GM10248 (cell line): ENCODE measurements at regions of chr5 and their contacts with region 1.

Region 1: DNA sequence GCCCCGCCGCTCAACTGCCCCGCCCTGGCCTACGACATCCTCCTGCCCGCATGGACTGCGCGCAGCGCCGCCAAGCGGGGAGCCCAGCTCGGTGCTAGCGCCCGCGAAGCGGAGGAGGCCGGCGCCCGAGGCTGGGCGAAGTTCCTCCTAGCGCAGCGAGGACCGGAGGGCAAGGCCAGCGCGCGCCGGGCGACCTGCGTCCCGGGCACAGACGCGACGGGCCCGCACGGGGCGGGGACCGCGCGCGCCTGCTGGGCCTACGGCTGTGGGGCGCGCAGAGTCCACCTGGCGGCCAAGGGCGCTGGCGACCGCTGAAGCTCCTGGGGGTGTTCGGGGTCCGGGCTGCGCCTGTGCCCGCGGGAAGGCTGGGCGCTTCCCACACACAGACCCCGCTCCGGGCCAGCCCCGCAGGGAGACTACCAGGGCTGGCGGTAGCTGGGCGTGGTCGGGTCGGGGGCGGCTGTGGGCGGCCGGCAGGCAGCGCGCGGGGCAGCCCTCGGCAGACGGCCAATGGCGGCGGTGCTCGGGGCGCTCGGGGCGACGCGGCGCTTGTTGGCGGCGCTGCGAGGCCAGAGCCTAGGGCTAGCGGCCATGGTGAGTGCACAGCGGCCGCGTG is at the start of gene PCBD2:
- DNase-seq: peak; percentile 89
- CTCF ChIP-seq: peak; percentile 95

Region 2: DNA sequence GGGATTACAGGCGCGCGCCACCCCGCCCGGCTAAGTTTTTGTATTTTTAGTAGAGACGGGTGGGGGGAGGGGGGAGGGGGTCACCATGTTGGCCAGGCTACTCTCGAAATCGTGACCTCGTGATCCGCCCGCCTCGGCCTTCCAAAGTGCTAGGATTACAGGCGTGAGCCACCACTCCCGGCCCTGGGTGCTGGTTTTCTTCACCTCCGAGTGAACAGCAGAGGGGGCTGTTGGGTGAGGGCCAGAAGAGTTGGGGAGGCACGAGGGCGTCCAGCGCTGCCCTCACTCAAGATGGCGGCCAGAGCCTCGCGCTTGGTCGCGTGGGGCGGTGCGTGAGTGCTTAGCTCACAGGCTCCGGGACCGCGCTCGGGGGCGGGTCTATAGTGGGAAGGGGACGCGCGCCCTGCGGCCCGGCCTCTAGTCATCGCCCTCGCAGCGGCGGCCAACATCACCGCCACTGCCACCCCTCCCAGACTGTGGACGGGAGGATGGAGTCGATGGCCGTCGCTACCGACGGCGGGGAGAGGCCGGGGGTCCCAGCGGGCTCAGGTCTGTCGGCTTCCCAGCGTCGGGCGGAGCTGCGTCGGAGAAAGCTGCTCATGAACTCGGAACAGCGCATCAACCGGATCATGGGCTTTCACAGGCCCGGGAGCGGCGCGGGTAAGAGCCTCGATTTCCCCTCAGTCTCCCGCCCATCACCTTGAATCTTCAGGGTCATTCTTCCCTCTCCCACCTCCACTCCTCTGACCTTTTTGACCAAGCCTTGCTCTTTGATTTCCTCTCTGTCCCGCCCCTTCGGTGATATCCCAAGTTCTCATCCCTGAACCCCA is 166.4 kb before region 1 on chr5 and contains the start of gene CAMLG:
- CTCF ChIA-PET with region 1: interaction called, 31 read pairs
- POLR2A ChIA-PET with region 1: interaction called, 5 read pairs
- DNase-seq: peak; percentile 95
- CTCF ChIP-seq: peak; percentile 87

Region 3: DNA sequence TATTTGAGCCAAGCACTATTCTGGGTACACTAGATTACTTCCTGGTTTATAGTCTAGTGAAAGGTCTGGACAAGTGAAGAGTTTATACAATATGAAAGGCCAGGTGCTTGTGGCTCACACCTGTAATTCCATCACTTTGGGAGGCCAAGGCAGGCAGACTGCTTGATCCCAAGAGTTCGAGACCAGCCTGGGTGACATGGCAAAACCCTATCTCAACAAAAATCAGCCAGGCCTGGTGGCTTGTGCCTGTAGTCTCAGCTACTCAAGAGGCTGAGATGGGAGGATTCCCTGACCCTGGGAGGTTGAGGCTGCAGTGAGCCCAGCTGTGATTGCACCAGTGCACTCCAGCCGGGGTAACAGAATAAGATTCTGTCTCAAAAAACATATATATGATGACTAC is 40.0 kb before region 1 on chr5:
- CTCF ChIA-PET with region 1: interaction called, 10 read pairs
- POLR2A ChIA-PET with region 1: interaction called, 3 read pairs
- DNase-seq: no peak
- CTCF ChIP-seq: no peak

Region 4: GRCh38 chr5:134879456-134879855 is 25.3 kb before region 1 on chr5:
- CTCF ChIA-PET with region 1: interaction called, 13 read pairs
- POLR2A ChIA-PET with region 1: no interaction called
- DNase-seq: no peak
- CTCF ChIP-seq: no peak

Region 5: GRCh38 chr5:134917070-134917815 is 12.5 kb after region 1 on chr5:
- CTCF ChIA-PET with region 1: interaction called, 38 read pairs
- POLR2A ChIA-PET with region 1: interaction called, 3 read pairs
- DNase-seq: no peak
- CTCF ChIP-seq: peak; percentile 37

Region 6: GRCh38 chr5:135013947-135014570 is 109.3 kb after region 1 on chr5:
- CTCF ChIA-PET with region 1: no interaction called
- POLR2A ChIA-PET with region 1: no interaction called
- DNase-seq: no peak
- CTCF ChIP-seq: no peak

Region 7: GRCh38 chr5:135139381-135140137 is 234.8 kb after region 1 on chr5:
- CTCF ChIA-PET with region 1: no interaction called
- POLR2A ChIA-PET with region 1: no interaction called
- DNase-seq: no peak
- CTCF ChIP-seq: no peak